ENCODE measurements at regions of chr19 and their contacts with region 1.

Region 1: DNA sequence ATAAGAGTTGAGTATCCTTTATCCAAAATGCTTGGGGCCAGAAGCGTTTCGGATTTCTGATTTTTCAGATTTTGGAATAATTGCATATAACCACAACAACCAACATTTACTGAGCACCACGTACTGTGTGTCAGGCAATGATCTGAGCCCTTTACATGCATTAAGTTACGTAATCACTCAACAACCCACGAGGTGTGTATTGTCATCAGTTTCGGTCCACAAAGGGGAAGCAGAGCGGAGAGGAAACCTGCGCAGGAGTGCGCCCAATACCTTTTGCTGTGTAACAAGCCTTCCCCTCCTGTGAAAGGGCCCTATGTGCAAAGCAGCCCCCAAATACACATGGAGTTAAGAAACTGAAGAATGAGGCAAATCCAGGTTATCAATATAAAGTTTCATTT is 20.7 kb upstream of the NLRP12 start:
- DNase-seq: no peak
- ATAC-seq: no peak

Region 2: DNA sequence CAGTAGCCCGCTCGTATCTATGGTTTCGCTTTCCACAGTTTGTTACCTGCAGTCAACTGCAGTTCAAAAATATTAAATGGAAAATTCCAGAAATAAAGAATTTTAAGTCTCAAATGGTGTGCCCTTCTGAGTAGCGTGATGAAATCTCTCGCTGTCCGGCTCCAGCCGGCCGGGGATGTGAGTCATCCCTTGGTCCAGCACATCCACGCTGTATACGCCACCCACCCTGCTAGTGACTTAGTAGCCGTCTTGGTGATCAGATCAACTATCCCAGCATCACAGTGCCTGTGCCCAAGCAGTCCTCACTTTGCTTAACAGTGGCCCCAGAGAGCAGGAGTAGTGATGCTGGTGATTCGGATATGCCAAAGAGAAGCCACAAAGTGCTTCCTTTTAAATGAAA is 266.9 kb before region 1 on chr19:
- intact Hi-C with region 1: no loop called
- DNase-seq: no peak
- ATAC-seq: no peak

Region 3: DNA sequence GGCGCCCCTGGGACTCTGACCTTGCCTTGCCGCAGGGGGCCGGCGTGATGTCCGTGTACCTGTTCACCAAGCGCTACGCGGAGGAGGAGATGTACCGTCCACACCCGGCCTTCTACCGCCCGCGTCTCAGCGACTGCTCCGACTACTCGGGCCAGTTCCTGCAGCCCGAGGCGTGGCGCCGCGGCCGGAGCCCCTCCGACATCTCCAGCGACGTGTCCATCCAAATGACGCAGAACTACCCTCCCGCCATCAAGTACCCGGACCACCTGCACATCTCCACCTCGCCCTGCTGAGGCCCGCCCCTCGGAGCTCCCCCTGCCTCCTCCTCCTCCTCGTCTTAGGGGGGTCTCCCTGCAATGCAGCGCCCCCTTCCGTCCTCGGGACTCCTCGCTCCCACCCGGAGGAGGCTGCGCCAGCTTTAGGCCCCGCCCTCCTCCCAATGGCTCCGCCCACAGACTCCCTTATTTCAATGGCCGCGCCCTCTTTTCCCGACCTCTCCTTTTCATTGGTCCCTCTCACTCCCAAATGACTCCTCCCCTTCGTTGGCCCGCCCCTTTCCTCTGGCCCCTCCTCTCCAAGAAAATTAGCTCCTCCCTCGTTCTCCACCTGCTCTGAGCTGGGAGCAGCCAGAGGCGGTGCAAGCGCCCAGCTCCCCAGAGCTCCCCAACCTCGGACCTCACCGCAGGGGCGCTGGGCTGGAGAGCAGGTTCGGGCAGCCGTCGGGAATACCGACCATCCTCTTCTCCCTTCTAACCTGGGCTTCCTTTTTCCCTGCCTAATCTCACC is 97.3 kb after region 1 on chr19:
- intact Hi-C with region 1: no loop called
- DNase-seq: no peak
- ATAC-seq: no peak

Region 4: GRCh38 chr19:54023191-54023590 is 178.3 kb after region 1 on chr19:
- intact Hi-C with region 1: loop called in 1 of 2 experiments (anchors 5 kb)
- DNase-seq: no peak
- ATAC-seq: no peak

Measured in left colon (tissue), 2 donors.